Prostate gland (tissue), 2 donors: ENCODE measurements at regions of chr7 and their contacts with region 1.

Region 1: GRCh38 chr7:25894902-25895791 is 256.9 kb upstream of the NFE2L3 start:
- DNase-seq: peak; percentile 35
- H3K4me3 ChIP-seq: no peak overlapping the region
- H3K27ac ChIP-seq: no peak overlapping the region
- H3K4me1 ChIP-seq: no peaks in the 10 kb centered on the region
- H3K27me3 ChIP-seq: peaks cover 2% of the 10 kb centered on the region
- CTCF ChIP-seq: peak in 3 of 4 experiments; percentile 37 to 50 (median 43)
- POLR2A ChIP-seq: no peak

Region 2: GRCh38 chr7:25158966-25159365 is 736.2 kb before region 1 on chr7:
- intact Hi-C with region 1: no loop called
- DNase-seq: no peak
- H3K4me3 ChIP-seq: no peak overlapping the region
- H3K27ac ChIP-seq: no peak overlapping the region
- H3K4me1 ChIP-seq: no peaks in the 10 kb centered on the region
- H3K27me3 ChIP-seq: no peaks in the 10 kb centered on the region
- CTCF ChIP-seq: no peak
- POLR2A ChIP-seq: no peak

Region 3: GRCh38 chr7:26061688-26062150 is 166.6 kb after region 1 on chr7:
- intact Hi-C with region 1: loop called (anchors 10 kb)
- DNase-seq: peak; percentile 76
- H3K4me3 ChIP-seq: no peak overlapping the region
- H3K27ac ChIP-seq: peak overlapping the region; percentile 28 to 50
- H3K4me1 ChIP-seq: peaks cover 4% of the 10 kb centered on the region
- H3K27me3 ChIP-seq: no peaks in the 10 kb centered on the region
- CTCF ChIP-seq: peak; percentile 32 to 89 (median 79)
- POLR2A ChIP-seq: no peak

Region 4: GRCh38 chr7:26667500-26668133 is 772.5 kb after region 1 on chr7:
- intact Hi-C with region 1: loop called (anchors 10 kb)
- DNase-seq: peak; percentile 75
- H3K4me3 ChIP-seq: no peak overlapping the region
- H3K27ac ChIP-seq: no peak overlapping the region
- H3K4me1 ChIP-seq: no peaks in the 10 kb centered on the region
- H3K27me3 ChIP-seq: no peaks in the 10 kb centered on the region
- CTCF ChIP-seq: peak in 3 of 4 experiments; percentile 84 to 88 (median 86)
- POLR2A ChIP-seq: no peak